IMR-90 (cell line): ENCODE measurements at regions of chr1 and their contacts with region 1.

Region 1: GRCh38 chr1:203985044-203985443 is 87.9 kb upstream of the SOX13 start:
- DNase-seq: no peak
- ATAC-seq: no peak
- H3K4me3 ChIP-seq: no peak overlapping the region
- H3K27ac ChIP-seq: no peak overlapping the region
- H3K4me1 ChIP-seq: no peaks in the 10 kb centered on the region
- H3K27me3 ChIP-seq: peaks cover 33% of the 10 kb centered on the region
- CTCF ChIP-seq: no peak
- POLR2A ChIP-seq: no peak
- RAD21 ChIP-seq: no peak

Region 2: GRCh38 chr1:204003529-204003928 is 18.5 kb after region 1 on chr1:
- CTCF ChIA-PET with region 1: no interaction called
- POLR2A ChIA-PET with region 1: no interaction called
- dilution Hi-C with region 1: no loop called
- in situ Hi-C with region 1: no loop called
- intact Hi-C with region 1: no loop called
- DNase-seq: no peak
- ATAC-seq: no peak
- H3K4me3 ChIP-seq: no peak overlapping the region
- H3K27ac ChIP-seq: no peak overlapping the region
- H3K4me1 ChIP-seq: no peaks in the 10 kb centered on the region
- H3K27me3 ChIP-seq: peaks cover 8% of the 10 kb centered on the region
- CTCF ChIP-seq: no peak
- POLR2A ChIP-seq: no peak
- RAD21 ChIP-seq: no peak

Region 3: DNA sequence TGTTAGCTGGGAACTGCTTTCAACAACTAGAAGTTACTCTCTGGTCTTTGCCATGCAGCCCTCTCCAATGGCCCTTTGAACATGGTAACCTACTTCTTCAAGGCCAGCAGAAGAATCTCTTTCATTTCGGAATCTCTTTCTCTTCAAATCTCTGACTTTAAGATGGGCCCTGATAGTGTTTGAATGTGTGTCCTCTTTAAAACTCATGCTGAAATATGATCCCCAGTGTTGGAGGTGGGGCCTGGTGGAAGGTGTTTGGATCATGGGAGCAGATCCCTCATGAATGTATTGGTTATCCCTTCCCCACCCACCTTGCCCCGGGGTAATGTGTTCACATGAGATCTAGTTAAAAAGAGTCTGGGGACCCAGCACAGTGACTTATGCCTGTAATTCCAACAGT is 33.4 kb after region 1 on chr1:
- CTCF ChIA-PET with region 1: no interaction called
- POLR2A ChIA-PET with region 1: no interaction called
- dilution Hi-C with region 1: no loop called
- in situ Hi-C with region 1: no loop called
- intact Hi-C with region 1: loop called (anchors 5 kb)
- DNase-seq: no peak
- ATAC-seq: no peak
- H3K4me3 ChIP-seq: no peak overlapping the region
- H3K27ac ChIP-seq: no peak overlapping the region
- H3K4me1 ChIP-seq: no peaks in the 10 kb centered on the region
- H3K27me3 ChIP-seq: peaks cover 22% of the 10 kb centered on the region
- CTCF ChIP-seq: no peak
- POLR2A ChIP-seq: no peak
- RAD21 ChIP-seq: no peak

Region 4: DNA sequence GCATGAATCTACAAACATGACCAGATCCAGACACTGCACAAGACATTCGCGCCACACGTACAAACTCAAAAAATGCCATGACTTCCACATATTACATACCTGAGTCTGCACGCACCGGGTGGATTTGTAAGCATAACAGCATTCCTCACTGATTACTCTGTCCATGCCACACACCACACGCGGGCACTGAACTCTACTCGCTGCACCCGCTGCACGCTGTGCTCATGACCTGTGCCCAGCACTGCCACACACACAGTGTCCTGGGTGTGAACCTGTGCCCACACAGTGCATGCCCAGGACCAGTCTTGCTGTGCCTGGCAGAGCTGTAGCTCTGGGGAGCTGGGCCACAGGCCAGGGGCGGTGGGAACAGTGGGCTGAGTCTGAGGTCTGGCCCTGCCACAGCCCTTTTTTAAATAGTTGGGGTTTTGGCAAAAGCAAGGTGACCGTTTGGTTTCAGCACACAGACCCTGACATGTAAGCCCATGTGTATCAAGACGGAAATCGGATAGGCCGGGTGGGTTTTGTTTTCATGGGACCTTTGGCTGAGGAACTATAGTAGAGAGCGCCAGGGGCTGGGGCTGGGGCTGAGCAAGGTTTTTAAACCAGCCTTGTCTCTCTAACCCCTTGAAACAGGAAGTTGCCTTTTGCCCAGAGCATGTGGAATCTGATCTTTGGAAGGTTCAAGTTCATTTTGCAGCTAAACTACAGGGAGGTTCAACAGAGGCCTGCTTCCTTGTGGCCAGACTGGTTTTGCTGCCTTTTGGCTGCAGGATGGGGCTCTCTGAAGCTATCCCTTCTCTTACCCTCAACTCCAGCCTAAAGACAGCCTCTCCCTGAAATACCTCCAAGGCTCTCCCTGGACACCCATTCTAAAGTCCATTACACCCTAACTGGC is 241.0 kb after region 1 on chr1:
- CTCF ChIA-PET with region 1: no interaction called
- POLR2A ChIA-PET with region 1: no interaction called
- dilution Hi-C with region 1: no loop called
- in situ Hi-C with region 1: no loop called
- intact Hi-C with region 1: no loop called
- DNase-seq: peak; percentile 27
- ATAC-seq: peak; percentile 27; the same call in 1 of the 2 replicates
- H3K4me3 ChIP-seq: no peak overlapping the region
- H3K27ac ChIP-seq: no peak overlapping the region
- H3K4me1 ChIP-seq: peaks cover 2% of the 10 kb centered on the region; the same call in 1 of the 2 replicates
- H3K27me3 ChIP-seq: no peaks in the 10 kb centered on the region
- CTCF ChIP-seq: no peak
- POLR2A ChIP-seq: no peak
- RAD21 ChIP-seq: no peak